Mammary epithelial cell (primary cell): ENCODE measurements at regions of chr15 and their contacts with region 1.

Region 1: DNA sequence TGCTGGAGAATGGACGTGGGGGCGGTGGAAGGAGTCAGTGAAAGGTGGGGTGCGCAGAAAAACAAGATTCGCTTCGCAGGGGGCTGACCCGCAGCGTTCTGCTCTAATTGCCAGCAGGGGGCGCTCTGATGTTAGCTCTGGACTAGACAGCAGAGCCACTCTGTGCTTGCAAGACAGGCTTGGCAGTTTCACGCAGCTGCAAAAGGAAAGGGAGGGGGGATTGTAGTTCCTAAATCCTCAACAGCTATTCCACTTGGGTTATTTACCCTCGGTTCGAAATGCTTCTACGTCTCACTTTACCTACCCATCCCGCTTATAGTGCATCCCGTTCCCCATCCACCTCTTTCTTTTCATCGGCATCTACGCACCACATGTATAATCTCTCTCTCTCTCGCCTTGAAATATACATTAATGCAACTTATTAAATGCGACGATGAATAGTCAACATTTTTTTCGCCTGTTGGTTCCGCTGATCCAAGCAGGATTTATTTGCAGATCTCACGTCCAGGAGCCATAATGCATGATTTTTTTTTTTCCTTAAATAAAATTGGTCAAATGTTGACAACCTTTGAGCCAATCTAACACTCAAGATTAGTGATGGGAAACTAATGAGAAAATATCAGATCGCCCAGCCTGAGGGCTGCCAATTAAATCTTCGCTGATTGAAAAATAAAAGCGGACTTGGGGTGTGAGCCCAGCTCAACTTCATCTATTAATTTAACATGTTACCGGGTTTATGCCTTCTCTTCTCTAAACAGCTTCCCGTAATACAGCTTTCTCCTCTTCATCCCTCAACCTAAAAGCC is 216.4 kb downstream of the MEIS2 start:
- DNase-seq: peak; percentile 53
- H3K4me3 ChIP-seq: no peak overlapping the region
- H3K27ac ChIP-seq: no peak overlapping the region
- H3K4me1 ChIP-seq: peaks cover 6% of the 10 kb centered on the region
- H3K27me3 ChIP-seq: peaks cover 33% of the 10 kb centered on the region
- CTCF ChIP-seq: peak; percentile 65 to 89

Region 2: DNA sequence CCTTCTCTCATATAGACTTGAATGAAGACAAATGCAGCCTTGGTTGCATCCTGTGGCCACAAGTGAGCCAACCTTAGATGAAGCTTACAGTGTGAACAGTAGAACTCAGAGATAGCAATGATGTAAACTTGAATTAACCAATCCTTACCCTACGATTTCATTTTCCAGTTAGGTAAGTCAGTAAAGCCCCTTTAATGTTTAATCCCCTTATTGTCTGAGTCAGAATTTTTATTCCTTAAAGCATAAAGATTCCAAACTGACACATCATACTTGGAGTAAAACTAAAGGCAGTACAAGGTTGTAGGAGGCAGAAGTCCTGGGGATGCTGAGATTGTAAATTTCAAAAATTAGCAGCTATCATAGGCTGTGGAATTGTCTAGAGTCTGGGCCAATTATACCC is 830.2 kb before region 1 on chr15:
- CTCF ChIA-PET with region 1: no interaction called
- dilution Hi-C with region 1: no loop called
- in situ Hi-C with region 1: no loop called
- intact Hi-C with region 1: loop called (anchors 2 kb)
- DNase-seq: peak; percentile 3
- H3K4me3 ChIP-seq: no peak overlapping the region
- H3K27ac ChIP-seq: no peak overlapping the region
- H3K4me1 ChIP-seq: no peaks in the 10 kb centered on the region
- H3K27me3 ChIP-seq: no peaks in the 10 kb centered on the region
- CTCF ChIP-seq: no peak

Region 3: DNA sequence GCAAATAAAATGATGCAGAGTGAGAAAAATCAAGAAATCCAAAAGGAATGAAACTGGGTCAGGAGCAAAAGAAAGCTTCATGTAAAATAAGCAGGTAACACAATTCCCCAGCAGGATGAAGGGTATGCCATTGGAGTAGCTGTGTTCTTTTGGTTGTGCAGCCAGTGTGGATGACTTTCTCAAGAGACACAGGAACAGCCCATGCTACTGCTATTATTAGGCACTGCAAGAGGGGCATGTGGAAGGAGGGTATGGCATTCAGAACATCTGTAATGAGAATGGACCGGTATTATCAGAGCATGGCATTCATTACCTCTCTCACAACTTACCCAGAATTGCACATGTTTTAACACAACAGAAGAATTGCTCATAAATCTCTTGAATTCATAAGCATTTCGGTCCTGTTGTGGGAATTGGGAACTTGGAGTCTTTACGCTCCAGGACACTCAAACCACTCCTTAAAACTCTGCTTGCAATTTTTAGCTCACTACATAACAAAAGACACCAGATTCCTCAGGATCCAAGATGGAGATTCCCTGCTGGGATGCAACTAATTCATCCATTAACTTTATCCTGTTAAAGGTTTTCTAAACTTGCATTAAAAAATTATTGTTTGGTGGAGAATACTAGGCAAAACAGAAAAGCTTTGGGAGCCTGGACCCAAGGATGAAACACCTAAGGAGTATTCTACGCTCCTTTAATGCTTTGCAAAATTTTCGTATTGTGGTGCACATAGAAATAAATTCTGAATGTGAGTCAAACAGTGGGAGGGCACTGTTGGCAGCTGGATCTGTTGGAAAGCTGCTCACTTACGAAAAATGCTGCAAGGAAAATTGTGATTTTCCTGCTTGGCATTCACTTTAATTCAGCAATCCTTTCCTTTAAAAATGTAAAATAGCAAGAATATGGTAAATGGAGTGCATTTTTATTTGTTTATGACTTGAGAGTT is 339.1 kb before region 1 on chr15:
- CTCF ChIA-PET with region 1: no interaction called
- dilution Hi-C with region 1: no loop called
- in situ Hi-C with region 1: no loop called
- intact Hi-C with region 1: loop called (anchors 10 kb)
- DNase-seq: no peak
- H3K4me3 ChIP-seq: no peak overlapping the region
- H3K27ac ChIP-seq: no peak overlapping the region
- H3K4me1 ChIP-seq: no peaks in the 10 kb centered on the region
- H3K27me3 ChIP-seq: no peaks in the 10 kb centered on the region
- CTCF ChIP-seq: no peak

Region 4: DNA sequence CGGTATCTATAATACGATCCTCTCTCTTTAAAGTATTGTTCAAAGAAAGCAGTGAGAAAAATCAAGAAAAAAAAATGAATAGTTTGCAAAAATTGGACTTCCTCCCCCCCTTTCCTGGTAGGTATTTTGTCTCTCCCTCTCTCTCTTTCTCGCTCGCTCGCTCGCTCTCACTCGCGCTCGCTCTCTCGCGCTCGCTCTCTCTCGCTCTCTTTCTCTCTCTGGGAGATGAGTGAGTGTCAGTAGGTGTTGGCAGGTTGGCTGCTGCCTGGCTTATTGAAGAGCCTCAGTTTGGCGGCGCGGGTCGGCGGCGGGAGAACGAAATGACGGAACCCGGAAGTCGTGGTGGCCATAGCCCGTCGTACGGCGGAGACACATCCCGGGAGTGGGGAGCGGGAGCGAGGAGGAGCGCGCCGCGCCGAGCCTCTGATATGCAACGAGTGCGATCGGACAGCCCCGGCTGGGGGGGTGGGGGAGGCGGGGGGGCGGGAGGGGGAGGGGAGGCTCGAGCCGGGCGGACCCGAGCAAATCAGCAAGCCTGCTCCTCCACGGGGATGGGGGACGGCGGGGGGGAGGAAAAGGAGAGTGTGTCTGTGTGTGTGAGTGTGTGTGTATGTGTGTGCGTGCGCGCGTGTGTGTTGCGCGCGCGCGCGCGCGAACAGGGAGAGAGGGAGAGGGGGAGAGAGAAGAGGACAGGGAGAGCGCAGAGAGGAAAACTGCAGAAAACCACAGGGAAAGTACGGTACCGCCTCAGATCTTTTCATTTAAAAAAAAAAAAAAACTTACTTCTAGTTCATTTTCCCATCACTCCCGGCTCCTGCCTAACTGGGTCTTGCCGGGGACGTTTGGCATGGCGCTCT is 216.4 kb after region 1 on chr15 and contains the start of gene MEIS2:
- CTCF ChIA-PET with region 1: no interaction called
- dilution Hi-C with region 1: no loop called
- in situ Hi-C with region 1: loop called in 1 of 2 experiments (anchors 10 kb)
- intact Hi-C with region 1: no loop called
- DNase-seq: peak; percentile 87
- H3K4me3 ChIP-seq: peak within 1 kb of the TSS; percentile 76 to 99 (median 97)
- H3K27ac ChIP-seq: peak within 1 kb of the TSS; percentile 82
- H3K4me1 ChIP-seq: peaks cover 10% of the 10 kb centered on the region
- H3K27me3 ChIP-seq: no peaks in the 10 kb centered on the region
- CTCF ChIP-seq: no peak
- total RNA-seq, gene MEIS2: 6.7 to 8.4 TPM

Region 5: GRCh38 chr15:37134699-37135131 is 250.8 kb after region 1 on chr15:
- CTCF ChIA-PET with region 1: interaction called, 3 read pairs
- dilution Hi-C with region 1: no loop called
- in situ Hi-C with region 1: loop called (anchors 5 to 10 kb)
- intact Hi-C with region 1: loop called (anchors 1 kb)
- DNase-seq: peak; percentile 10
- H3K4me3 ChIP-seq: no peak overlapping the region
- H3K27ac ChIP-seq: no peak overlapping the region
- H3K4me1 ChIP-seq: no peaks in the 10 kb centered on the region
- H3K27me3 ChIP-seq: peaks cover 4% of the 10 kb centered on the region
- CTCF ChIP-seq: peak; percentile 64 to 67

Region 6: GRCh38 chr15:37891766-37892368 is 1008.0 kb after region 1 on chr15:
- CTCF ChIA-PET with region 1: no interaction called
- dilution Hi-C with region 1: no loop called
- in situ Hi-C with region 1: loop called (anchors 25 kb)
- intact Hi-C with region 1: no loop called
- DNase-seq: peak; percentile 42
- H3K4me3 ChIP-seq: no peak overlapping the region
- H3K27ac ChIP-seq: no peak overlapping the region
- H3K4me1 ChIP-seq: no peaks in the 10 kb centered on the region
- H3K27me3 ChIP-seq: no peaks in the 10 kb centered on the region
- CTCF ChIP-seq: peak; percentile 90